ENCODE measurements at regions of chr6 and their contacts with region 1.

Region 1: GRCh38 chr6:167306400-167306998 is 15.4 kb downstream of the UNC93A start:
- DNase-seq: no peak
- ATAC-seq: no peak
- H3K4me3 ChIP-seq: no peak overlapping the region
- H3K27ac ChIP-seq: no peak overlapping the region
- H3K4me1 ChIP-seq: no peaks in the 10 kb centered on the region
- H3K27me3 ChIP-seq: no peaks in the 10 kb centered on the region
- CTCF ChIP-seq: no peak

Region 2: DNA sequence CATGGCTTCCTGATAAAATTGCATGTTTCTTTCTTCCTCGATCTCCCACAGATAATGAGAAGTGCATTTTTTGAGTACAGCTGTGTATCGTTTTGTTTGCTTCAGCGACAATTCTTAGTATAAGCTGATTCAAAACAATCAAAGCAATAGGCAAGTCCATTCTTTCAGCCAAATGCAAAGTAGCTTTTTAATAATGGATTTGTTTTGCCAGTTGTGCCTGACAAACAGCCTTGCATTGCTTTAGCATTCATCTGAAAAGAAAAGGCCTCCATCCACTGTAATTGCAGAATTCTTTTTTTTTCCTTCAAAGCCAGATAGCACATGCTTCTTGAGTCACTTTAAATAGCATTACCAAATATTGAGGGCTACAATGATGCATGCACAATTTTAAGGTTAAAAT is 50.4 kb after region 1 on chr6:
- CTCF ChIA-PET with region 1: no interaction called
- POLR2A ChIA-PET with region 1: no interaction called
- in situ Hi-C with region 1: no loop called
- intact Hi-C with region 1: loop called (anchors 5 kb)
- DNase-seq: no peak
- ATAC-seq: no peak
- H3K4me3 ChIP-seq: no peak overlapping the region
- H3K27ac ChIP-seq: no peak overlapping the region
- H3K4me1 ChIP-seq: 0 out of 2 replicates have a peak, but pooled peaks cover 1% of the 10 kb centered on the region
- H3K27me3 ChIP-seq: peaks cover 8% of the 10 kb centered on the region
- CTCF ChIP-seq: no peak